ENCODE measurements at regions of chr17 and their contacts with region 1.

Region 1: DNA sequence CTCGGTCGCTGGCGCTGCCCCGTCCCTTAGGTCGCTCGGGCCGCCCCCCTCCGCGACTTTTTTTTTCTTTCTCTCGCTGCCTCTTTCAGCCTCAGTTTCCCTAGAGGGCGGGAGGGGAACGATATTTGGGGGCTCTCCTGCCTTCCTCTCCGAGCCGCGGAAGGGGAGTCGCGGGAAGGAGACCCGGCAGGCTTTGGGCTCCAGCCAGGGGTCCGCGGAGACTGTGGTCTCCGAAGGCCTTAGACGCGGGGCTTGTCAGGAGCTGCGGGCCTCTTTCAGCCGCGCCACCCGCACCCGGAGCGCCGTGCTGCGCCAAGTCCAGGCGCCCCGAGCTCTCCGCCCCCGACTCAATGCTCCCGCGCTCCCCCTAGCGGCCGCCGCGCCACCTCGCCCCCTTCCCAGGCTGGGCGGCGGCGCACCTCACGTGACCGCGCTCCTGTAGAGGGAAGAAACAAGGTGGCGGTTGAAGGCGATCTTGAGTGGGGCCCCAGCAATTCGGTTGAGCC is at the start of gene LRRC37B:
- DNase-seq: peak; percentile 84 to 88
- H3K4me3 ChIP-seq: peak within 1 kb of the TSS; percentile 76 to 90 (median 90)
- H3K27ac ChIP-seq: peak within 1 kb of the TSS; percentile 91
- H3K4me1 ChIP-seq: peaks cover 0 to 4% of the 10 kb centered on the region in 2 donors
- H3K27me3 ChIP-seq: no peaks in the 10 kb centered on the region
- CTCF ChIP-seq: peak; percentile 86 to 94 (median 89)
- POLR2A ChIP-seq: no peak
- total RNA-seq, gene LRRC37B: 11.2 to 33.8 (median 21.0) TPM

Region 2: DNA sequence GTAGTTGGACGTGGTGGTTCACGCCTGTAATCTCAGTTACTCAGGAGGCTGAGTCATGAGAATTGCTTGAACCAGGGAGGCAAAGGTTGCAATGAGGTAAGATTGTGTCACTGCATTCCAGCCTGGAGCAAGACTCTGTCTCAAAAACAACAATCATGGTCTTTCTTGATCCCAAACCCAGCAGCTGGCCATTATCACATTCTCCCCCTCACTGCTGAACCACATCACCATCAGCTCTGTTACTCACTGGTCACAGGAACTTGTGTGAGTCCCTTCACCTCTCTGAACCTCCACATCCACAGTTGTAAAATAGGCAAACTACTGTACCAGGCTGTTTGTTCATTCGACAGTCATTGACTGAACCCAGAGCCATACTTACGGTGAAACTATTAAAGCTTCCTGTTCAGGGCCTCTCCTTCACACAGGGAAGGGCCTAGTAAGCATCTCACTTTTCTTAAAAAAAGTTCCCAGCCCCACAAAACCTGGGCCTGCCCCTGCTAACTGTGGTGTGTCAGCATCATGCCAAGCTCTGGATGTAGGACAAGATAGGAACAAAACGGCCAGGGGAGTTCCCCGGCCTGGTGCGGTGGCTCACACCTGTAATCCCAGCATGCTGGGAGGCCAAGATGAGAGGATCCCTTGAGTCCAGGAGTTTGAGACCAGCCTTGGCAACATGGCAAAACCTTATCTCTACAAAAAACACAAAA is 252.6 kb before region 1 on chr17:
- intact Hi-C with region 1: loop called (anchors 5 kb)
- DNase-seq: no peak
- H3K4me3 ChIP-seq: no peak overlapping the region
- H3K27ac ChIP-seq: no peak overlapping the region
- H3K4me1 ChIP-seq: no peaks in the 10 kb centered on the region
- H3K27me3 ChIP-seq: no peaks in the 10 kb centered on the region
- CTCF ChIP-seq: no peak
- POLR2A ChIP-seq: no peak

Region 3: DNA sequence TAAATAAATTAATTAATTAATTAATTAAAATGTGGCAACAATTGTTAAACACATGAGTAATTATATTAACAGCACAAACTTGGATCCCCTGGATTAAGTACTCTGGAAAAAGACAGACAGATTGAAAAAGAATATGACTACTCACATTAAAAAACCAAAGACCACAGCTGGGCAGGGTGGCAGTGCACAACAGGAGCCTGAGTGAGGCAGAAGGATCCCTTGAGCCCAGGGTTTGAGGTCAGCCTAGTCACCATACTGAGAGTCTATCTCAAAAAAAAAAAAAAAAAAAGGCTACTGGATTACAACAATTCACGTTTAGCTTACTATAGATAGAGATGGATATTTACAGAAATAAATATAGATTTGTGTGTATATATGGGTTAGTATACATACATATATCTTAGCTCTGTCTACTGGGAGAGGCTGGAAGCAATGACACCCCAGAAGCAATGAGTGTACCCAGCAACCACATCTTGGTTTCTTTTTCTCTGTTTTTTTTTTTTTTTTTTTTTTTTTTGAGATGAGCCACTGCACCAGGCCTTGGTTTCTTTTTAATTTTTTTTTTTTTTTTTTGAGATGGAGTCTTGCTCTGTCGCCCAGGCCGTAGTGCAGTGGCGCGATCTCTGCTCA is 80.8 kb before region 1 on chr17:
- intact Hi-C with region 1: no loop called
- DNase-seq: no peak
- H3K4me3 ChIP-seq: no peak overlapping the region
- H3K27ac ChIP-seq: no peak overlapping the region
- H3K4me1 ChIP-seq: no peaks in the 10 kb centered on the region
- H3K27me3 ChIP-seq: no peaks in the 10 kb centered on the region
- CTCF ChIP-seq: no peak
- POLR2A ChIP-seq: no peak

Region 4: DNA sequence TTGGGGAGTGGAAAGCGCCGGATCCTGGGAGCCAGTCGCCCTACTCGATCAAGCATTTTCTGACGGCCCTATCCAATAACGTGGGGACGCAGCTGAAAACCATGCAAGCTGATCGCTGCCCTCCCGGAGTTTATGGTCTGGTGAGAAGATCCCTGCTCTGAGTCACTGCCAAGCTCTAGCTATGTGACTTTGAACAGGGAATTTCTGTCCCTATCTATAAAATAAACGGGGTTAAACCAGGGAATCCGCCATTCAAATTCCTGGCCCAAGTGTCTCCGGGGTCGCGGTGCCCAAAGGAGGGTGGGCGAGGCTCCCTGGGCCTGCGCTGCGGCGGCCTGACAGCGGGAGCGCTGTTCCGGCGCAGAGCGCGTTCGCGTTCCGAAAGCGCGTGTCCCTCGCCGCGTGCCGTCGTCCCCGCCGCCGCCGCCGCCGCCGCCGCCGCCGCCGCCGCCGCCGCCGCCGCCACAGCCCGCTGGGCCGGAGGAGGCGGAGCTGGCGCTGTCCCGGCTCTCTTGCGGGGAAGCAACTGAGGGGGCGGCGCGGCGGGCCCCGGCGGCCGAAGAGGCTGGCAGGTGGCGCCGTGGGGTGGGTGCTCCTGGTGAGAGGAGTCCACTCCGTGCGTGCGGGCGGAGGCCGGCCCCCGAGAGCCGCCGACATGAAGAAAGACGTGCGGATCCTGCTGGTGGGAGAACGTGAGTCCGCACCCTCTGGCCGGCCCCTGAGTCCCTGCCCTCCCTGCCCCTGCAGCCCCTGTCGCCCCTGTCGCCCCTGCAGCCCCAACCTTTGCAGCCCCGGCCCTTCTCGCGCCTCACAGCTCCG is 135.2 kb after region 1 on chr17 and contains the start of gene RHOT1:
- intact Hi-C with region 1: loop called (anchors 2 kb)
- DNase-seq: peak; percentile 52 to 69
- H3K4me3 ChIP-seq: peak within 1 kb of the TSS; percentile 98 to 99 (median 99)
- H3K27ac ChIP-seq: peak within 1 kb of the TSS; percentile 90 to 96
- H3K4me1 ChIP-seq: peaks cover 0 to 7% of the 10 kb centered on the region in 2 donors
- H3K27me3 ChIP-seq: no peaks in the 10 kb centered on the region
- CTCF ChIP-seq: peak in 2 of 3 donors; percentile 60 to 78
- POLR2A ChIP-seq: no peak
- total RNA-seq, gene RHOT1: 62.9 to 74.6 (median 72.0) TPM

Measured in breast epithelium (tissue), 4 donors.